ENCODE measurements at regions of chr1 and their contacts with region 1.

Region 1: GRCh38 chr1:235971571-235972310 is 93.1 kb downstream of the NID1 start:
- DNase-seq: peak; percentile 78 to 84 (median 82)
- H3K4me3 ChIP-seq: peak overlapping the region in 1 of 2 donors; percentile 28
- H3K4me3 Mint-ChIP-seq: peak overlapping the region; percentile 16 to 79 (median 56)
- H3K27ac ChIP-seq: no peak overlapping the region
- H3K27ac Mint-ChIP-seq: peak overlapping the region; percentile 12 to 79 (median 74)
- H3K4me1 ChIP-seq: peaks cover 11% of the 10 kb centered on the region
- H3K4me1 Mint-ChIP-seq: peaks cover 6 to 17% (median 15%) of the 10 kb centered on the region in 4 donors
- H3K27me3 ChIP-seq: no peaks in the 10 kb centered on the region
- H3K27me3 Mint-ChIP-seq: no peaks in the 10 kb centered on the region

Region 2: DNA sequence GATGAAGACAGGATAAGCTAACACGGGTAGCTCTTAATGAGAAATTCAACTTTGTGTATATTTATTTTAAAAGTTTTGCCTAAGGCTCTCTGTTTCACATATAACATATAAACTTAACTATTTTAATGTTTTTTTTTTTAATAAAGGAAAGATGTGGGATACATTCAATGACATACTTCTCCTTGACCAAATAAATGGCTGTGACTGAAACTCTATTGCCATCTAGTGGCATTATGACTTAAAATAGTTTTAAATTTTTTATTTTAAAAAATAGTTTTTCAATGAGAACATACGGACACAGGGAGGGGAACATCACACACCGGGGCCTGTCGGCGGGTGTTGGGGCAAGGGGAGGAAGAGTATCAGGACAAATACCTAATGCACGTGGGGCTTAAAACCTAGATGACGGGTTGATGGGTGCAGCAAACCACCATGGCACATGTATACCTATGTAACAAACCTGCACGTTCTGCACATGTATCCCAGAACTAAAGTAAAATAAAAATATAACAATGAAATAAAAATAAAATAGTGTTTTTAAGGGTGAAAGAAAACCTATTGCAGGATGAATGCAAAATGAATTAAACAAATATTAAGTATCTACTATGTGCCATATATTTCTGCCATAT is 188.5 kb before region 1 on chr1:
- CTCF ChIA-PET with region 1: interaction called, 43 read pairs
- POLR2A ChIA-PET with region 1: no interaction called
- intact Hi-C with region 1: loop called (anchors 1 kb)
- DNase-seq: peak in 4 of 5 donors; percentile 8 to 30 (median 9)
- H3K4me3 ChIP-seq: no peak overlapping the region
- H3K4me3 Mint-ChIP-seq: no peak overlapping the region
- H3K27ac ChIP-seq: no peak overlapping the region
- H3K27ac Mint-ChIP-seq: no peak overlapping the region
- H3K4me1 ChIP-seq: no peaks in the 10 kb centered on the region
- H3K4me1 Mint-ChIP-seq: no peaks in the 10 kb centered on the region
- H3K27me3 ChIP-seq: no peaks in the 10 kb centered on the region
- H3K27me3 Mint-ChIP-seq: no peaks in the 10 kb centered on the region

Region 3: DNA sequence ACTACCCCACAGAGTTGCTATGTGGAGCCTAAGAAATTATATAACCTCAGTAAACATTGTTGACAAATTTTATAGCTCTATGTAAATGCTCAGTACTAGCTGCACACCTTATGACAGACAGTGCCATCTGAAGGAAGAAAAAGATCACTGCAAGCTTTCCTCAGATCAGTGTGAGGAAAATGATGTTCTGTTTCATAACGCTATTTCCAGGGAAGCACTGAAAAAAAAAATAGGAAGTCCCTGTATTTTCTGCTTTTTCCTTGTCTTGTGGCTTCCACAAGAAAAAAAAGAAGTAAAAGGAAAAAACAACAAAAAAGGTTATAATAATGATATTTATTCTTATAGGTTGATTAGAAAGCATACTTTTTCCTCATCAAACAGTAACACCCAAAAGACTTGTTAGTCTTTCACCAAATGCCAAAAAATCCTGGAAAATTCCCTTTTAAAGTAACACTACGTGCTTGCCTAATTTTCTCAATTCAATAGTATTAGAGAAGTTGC is 128.2 kb before region 1 on chr1:
- CTCF ChIA-PET with region 1: interaction called, 34 read pairs
- POLR2A ChIA-PET with region 1: interaction called, 3 read pairs
- intact Hi-C with region 1: no loop called
- DNase-seq: peak in 1 of 5 donors; percentile 8
- H3K4me3 ChIP-seq: no peak overlapping the region
- H3K4me3 Mint-ChIP-seq: no peak overlapping the region
- H3K27ac ChIP-seq: no peak overlapping the region
- H3K27ac Mint-ChIP-seq: no peak overlapping the region
- H3K4me1 ChIP-seq: peaks cover 13% of the 10 kb centered on the region
- H3K4me1 Mint-ChIP-seq: peaks cover 37 to 54% (median 41%) of the 10 kb centered on the region in 4 donors
- H3K27me3 ChIP-seq: no peaks in the 10 kb centered on the region
- H3K27me3 Mint-ChIP-seq: no peaks in the 10 kb centered on the region

Region 4: DNA sequence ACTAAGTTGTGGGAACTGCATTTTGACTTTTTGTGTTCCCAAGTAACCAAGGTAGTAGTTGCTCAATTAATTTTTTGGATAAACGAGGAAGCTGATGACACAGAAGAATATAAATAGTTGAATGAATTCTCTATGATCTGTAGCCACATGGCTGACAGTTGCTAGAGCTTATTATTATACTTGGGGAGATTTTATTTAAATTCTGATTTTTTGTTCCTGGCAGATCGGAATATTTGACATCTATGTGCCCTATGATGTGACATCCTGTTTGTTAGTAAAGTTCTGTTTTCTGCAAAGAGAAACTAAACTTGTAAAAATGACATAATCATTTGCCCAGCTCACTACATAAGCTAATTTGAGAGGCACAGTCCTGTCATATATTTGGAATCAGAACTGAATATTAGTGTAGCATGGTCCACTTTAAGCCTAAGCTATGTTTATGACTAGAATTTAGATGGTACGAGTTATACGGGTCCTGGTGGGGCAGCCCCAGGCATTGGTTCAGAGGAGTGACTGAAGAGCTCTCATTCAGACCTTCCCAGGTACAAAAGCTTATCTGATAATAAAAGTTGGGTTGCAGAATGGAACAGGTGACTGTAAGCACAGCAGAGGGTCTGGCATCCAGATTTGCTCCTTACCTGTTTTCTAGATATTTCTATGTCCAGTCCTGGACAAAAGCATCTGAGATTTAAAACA is 95.2 kb before region 1 on chr1:
- CTCF ChIA-PET with region 1: interaction called, 14 read pairs
- POLR2A ChIA-PET with region 1: interaction called, 3 read pairs
- intact Hi-C with region 1: no loop called
- DNase-seq: peak in 4 of 5 donors; percentile 28 to 39 (median 32)
- H3K4me3 ChIP-seq: no peak overlapping the region
- H3K4me3 Mint-ChIP-seq: peak overlapping the region in 6 of 8 donors; percentile 61 to 84 (median 69)
- H3K27ac ChIP-seq: peak overlapping the region; percentile 56
- H3K27ac Mint-ChIP-seq: peak overlapping the region; percentile 57 to 91 (median 86)
- H3K4me1 ChIP-seq: peaks cover 33% of the 10 kb centered on the region
- H3K4me1 Mint-ChIP-seq: peaks cover 20 to 55% (median 34%) of the 10 kb centered on the region in 4 donors
- H3K27me3 ChIP-seq: no peaks in the 10 kb centered on the region
- H3K27me3 Mint-ChIP-seq: peaks cover 0 to 1% of the 10 kb centered on the region in 2 donors

Region 5: DNA sequence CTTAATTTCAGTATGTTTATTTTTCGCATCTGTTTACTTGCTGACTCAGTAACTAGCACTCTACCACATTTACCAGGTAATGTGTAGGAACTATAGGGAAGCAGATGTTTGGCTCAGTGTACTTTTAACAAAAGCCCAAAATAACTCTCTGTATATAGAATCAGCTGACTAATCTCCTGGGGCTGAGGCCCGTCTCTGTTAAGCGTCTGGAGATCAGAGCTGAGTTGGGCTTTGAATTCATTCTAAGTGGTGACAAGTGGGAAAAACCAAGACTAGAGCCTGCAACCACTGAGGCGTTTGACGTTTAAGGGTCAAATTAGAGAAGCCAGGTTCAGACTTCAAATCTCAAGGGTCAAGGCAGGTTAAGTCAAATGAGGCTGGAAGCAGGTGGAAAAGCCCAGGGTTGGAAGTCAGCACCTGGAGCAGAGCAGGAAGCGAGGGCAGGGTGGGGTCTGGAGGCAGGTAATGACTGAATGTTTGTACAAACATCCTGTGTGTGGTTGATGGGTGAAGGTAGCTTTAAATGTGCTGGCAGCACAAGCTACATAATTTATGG is 48.2 kb before region 1 on chr1:
- CTCF ChIA-PET with region 1: interaction called, 25 read pairs
- POLR2A ChIA-PET with region 1: interaction called, 7 read pairs
- intact Hi-C with region 1: no loop called
- DNase-seq: peak; percentile 38 to 53 (median 46)
- H3K4me3 ChIP-seq: no peak overlapping the region
- H3K4me3 Mint-ChIP-seq: peak overlapping the region; percentile 32 to 88 (median 74)
- H3K27ac ChIP-seq: no peak overlapping the region
- H3K27ac Mint-ChIP-seq: peak overlapping the region; percentile 78 to 96 (median 91)
- H3K4me1 ChIP-seq: peaks cover 29% of the 10 kb centered on the region
- H3K4me1 Mint-ChIP-seq: peaks cover 27 to 54% (median 38%) of the 10 kb centered on the region in 4 donors
- H3K27me3 ChIP-seq: no peaks in the 10 kb centered on the region
- H3K27me3 Mint-ChIP-seq: no peaks in the 10 kb centered on the region

Region 6: DNA sequence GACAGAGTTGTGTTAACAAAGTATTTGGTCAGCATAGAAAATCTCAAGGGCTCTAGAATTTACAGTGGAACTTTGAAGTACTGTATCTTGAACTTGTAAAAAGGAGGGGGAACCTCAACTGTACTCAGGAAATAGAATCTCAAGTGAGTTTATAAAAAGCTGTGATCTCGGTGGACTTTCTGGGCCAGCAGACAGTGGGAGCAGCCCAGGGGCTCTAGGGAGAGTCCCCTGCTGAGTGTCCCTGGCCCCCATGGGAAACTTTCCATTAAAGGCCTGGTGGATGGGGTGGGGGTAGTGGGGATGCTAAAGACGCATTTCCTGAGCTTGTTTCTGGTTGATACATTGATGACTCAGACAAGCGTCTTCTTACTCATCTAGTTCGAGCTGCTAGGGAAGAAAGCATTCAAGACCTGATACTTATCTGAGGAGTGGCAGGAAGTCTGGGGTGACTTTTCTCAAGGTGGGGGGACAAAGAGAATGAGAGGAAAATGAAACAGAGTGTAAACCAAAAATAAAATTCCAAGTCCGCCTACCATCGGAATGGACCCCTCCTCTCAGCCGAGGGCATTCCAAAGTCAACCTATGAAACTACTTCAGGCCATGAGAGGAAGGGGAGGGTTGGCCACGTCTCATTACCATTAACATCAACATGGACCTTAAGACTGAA is 27.7 kb after region 1 on chr1:
- CTCF ChIA-PET with region 1: interaction called, 25 read pairs
- POLR2A ChIA-PET with region 1: interaction called, 17 read pairs
- intact Hi-C with region 1: no loop called
- DNase-seq: peak; percentile 81 to 95 (median 83)
- H3K4me3 ChIP-seq: peak overlapping the region in 1 of 2 donors; percentile 15
- H3K4me3 Mint-ChIP-seq: peak overlapping the region; percentile 26 to 88 (median 73)
- H3K27ac ChIP-seq: peak overlapping the region; percentile 90
- H3K27ac Mint-ChIP-seq: peak overlapping the region; percentile 88 to 100 (median 99)
- H3K4me1 ChIP-seq: peaks cover 53% of the 10 kb centered on the region
- H3K4me1 Mint-ChIP-seq: peaks cover 37 to 58% (median 49%) of the 10 kb centered on the region in 4 donors
- H3K27me3 ChIP-seq: no peaks in the 10 kb centered on the region
- H3K27me3 Mint-ChIP-seq: no peaks in the 10 kb centered on the region

Region 7: GRCh38 chr1:236185692-236186091 is 214.0 kb after region 1 on chr1:
- CTCF ChIA-PET with region 1: no interaction called
- POLR2A ChIA-PET with region 1: no interaction called
- intact Hi-C with region 1: no loop called
- DNase-seq: no peak
- H3K4me3 ChIP-seq: no peak overlapping the region
- H3K4me3 Mint-ChIP-seq: no peak overlapping the region
- H3K27ac ChIP-seq: no peak overlapping the region
- H3K27ac Mint-ChIP-seq: peak overlapping the region in 1 of 7 donors; percentile 2
- H3K4me1 ChIP-seq: no peaks in the 10 kb centered on the region
- H3K4me1 Mint-ChIP-seq: peaks cover 0 to 3% (median 0%) of the 10 kb centered on the region in 4 donors
- H3K27me3 ChIP-seq: no peaks in the 10 kb centered on the region
- H3K27me3 Mint-ChIP-seq: no peaks in the 10 kb centered on the region

Measured in CD4-positive, alpha-beta memory T cell (primary cell).